CD4-positive, alpha-beta T cell (primary cell): ENCODE measurements at regions of chr3 and their contacts with region 1.

Region 1: GRCh38 chr3:71050538-71051258 is 532.8 kb downstream of the FOXP1 start:
- DNase-seq: peak in 7 of 14 experiments; percentile 13 to 87 (median 54)
- ATAC-seq: peak; percentile 92
- H3K4me3 ChIP-seq: no peak overlapping the region
- H3K4me3 Mint-ChIP-seq: peak overlapping the region; percentile 55
- H3K27ac ChIP-seq: peak overlapping the region; percentile 6 to 73
- H3K27ac Mint-ChIP-seq: no peak overlapping the region
- H3K4me1 ChIP-seq: peaks cover 61% of the 10 kb centered on the region
- H3K4me1 Mint-ChIP-seq: peaks cover 100% of the 10 kb centered on the region
- H3K27me3 ChIP-seq: no peaks in the 10 kb centered on the region
- H3K27me3 Mint-ChIP-seq: no peaks in the 10 kb centered on the region
- CTCF ChIP-seq: no peak

Region 2: GRCh38 chr3:71031914-71032521 is 18.7 kb before region 1 on chr3:
- CTCF ChIA-PET with region 1: interaction called, 3 read pairs
- POLR2A ChIA-PET with region 1: no interaction called
- intact Hi-C with region 1: loop called (anchors 2 kb)
- DNase-seq: peak in 4 of 14 experiments; percentile 18 to 53 (median 36)
- ATAC-seq: peak; percentile 82
- H3K4me3 ChIP-seq: no peak overlapping the region
- H3K4me3 Mint-ChIP-seq: peak overlapping the region; percentile 1
- H3K27ac ChIP-seq: peak overlapping the region in 1 of 2 donors; percentile 47
- H3K27ac Mint-ChIP-seq: peak overlapping the region; percentile 86
- H3K4me1 ChIP-seq: peaks cover 38% of the 10 kb centered on the region
- H3K4me1 Mint-ChIP-seq: peaks cover 97% of the 10 kb centered on the region
- H3K27me3 ChIP-seq: no peaks in the 10 kb centered on the region
- H3K27me3 Mint-ChIP-seq: no peaks in the 10 kb centered on the region
- CTCF ChIP-seq: no peak

Region 3: GRCh38 chr3:71087143-71088018 is 36.7 kb after region 1 on chr3:
- CTCF ChIA-PET with region 1: no interaction called
- POLR2A ChIA-PET with region 1: interaction called, 4 read pairs
- intact Hi-C with region 1: loop called in 1 of 2 experiments (anchors 1 kb)
- DNase-seq: peak in 10 of 14 experiments; percentile 14 to 86 (median 47)
- ATAC-seq: peak; percentile 77
- H3K4me3 ChIP-seq: peak overlapping the region; percentile 11
- H3K4me3 Mint-ChIP-seq: peak overlapping the region; percentile 69
- H3K27ac ChIP-seq: peak overlapping the region; percentile 57 to 71
- H3K27ac Mint-ChIP-seq: peak overlapping the region; percentile 86
- H3K4me1 ChIP-seq: peaks cover 81% of the 10 kb centered on the region
- H3K4me1 Mint-ChIP-seq: peaks cover 86% of the 10 kb centered on the region
- H3K27me3 ChIP-seq: no peaks in the 10 kb centered on the region
- H3K27me3 Mint-ChIP-seq: no peaks in the 10 kb centered on the region
- CTCF ChIP-seq: no peak

Region 4: DNA sequence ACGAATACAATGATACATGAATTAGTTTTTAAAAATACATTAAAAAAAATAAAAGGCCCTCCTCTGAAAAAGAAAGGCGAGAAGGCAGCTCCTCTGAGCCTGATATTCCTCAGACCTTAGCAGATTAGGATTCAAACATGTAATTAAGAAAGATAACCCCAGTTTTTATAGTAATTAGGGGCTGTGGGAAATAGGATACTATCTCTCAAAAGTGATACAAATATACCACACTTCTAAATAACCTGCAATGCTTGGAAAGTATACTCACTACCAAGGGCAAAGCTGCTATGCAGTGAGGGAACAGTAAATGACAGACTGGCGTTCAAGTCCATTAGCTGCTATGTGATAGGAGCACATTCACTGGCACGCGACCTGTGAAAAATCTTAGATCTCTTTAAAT is 87.7 kb after region 1 on chr3:
- CTCF ChIA-PET with region 1: no interaction called
- POLR2A ChIA-PET with region 1: no interaction called
- intact Hi-C with region 1: no loop called
- DNase-seq: no peak
- ATAC-seq: no peak
- H3K4me3 ChIP-seq: no peak overlapping the region
- H3K4me3 Mint-ChIP-seq: no peak overlapping the region
- H3K27ac ChIP-seq: no peak overlapping the region
- H3K27ac Mint-ChIP-seq: peak overlapping the region; percentile 98
- H3K4me1 ChIP-seq: peaks cover 29% of the 10 kb centered on the region
- H3K4me1 Mint-ChIP-seq: peaks cover 89% of the 10 kb centered on the region
- H3K27me3 ChIP-seq: no peaks in the 10 kb centered on the region
- H3K27me3 Mint-ChIP-seq: no peaks in the 10 kb centered on the region
- CTCF ChIP-seq: no peak